OCI-LY7 (cell line): ENCODE measurements at regions of chr4 and their contacts with region 1.

Region 1: GRCh38 chr4:113394730-113395530 is 345.5 kb downstream of the ANK2 start:
- DNase-seq: peak; percentile 85
- H3K4me3 ChIP-seq: no peak overlapping the region
- H3K27ac ChIP-seq: no peak overlapping the region
- H3K4me1 ChIP-seq: no peaks in the 10 kb centered on the region
- CTCF ChIP-seq: peak; percentile 94

Region 2: GRCh38 chr4:113908829-113909228 is 513.9 kb after region 1 on chr4:
- CTCF ChIA-PET with region 1: no interaction called
- POLR2A ChIA-PET with region 1: no interaction called
- intact Hi-C with region 1: loop called (anchors 2 kb)
- DNase-seq: peak; percentile 20
- H3K4me3 ChIP-seq: no peak overlapping the region
- H3K27ac ChIP-seq: no peak overlapping the region
- H3K4me1 ChIP-seq: no peaks in the 10 kb centered on the region
- CTCF ChIP-seq: peak; percentile 74

Region 3: GRCh38 chr4:114072781-114073180 is 677.9 kb after region 1 on chr4:
- CTCF ChIA-PET with region 1: interaction called, 3 read pairs
- POLR2A ChIA-PET with region 1: no interaction called
- intact Hi-C with region 1: loop called (anchors 1 kb)
- DNase-seq: no peak
- H3K4me3 ChIP-seq: no peak overlapping the region
- H3K27ac ChIP-seq: no peak overlapping the region
- H3K4me1 ChIP-seq: no peaks in the 10 kb centered on the region
- CTCF ChIP-seq: no peak

Region 4: GRCh38 chr4:114386637-114387233 is 991.8 kb after region 1 on chr4:
- CTCF ChIA-PET with region 1: no interaction called
- POLR2A ChIA-PET with region 1: no interaction called
- intact Hi-C with region 1: loop called (anchors 2 kb)
- DNase-seq: peak; percentile 34
- H3K4me3 ChIP-seq: no peak overlapping the region
- H3K27ac ChIP-seq: no peak overlapping the region
- H3K4me1 ChIP-seq: no peaks in the 10 kb centered on the region
- CTCF ChIP-seq: peak; percentile 94